Activated CD4-positive, alpha-beta T cell treated with anti-CD3 and anti-CD28 coated beads for 36 hours (primary cell): ENCODE measurements at regions of chr22 and their contacts with region 1.

Region 1: GRCh38 chr22:29603358-29604075 is at the start of gene NF2:
- DNase-seq: peak; percentile 99
- ATAC-seq: peak; percentile 97
- H3K4me3 Mint-ChIP-seq: peak within 1 kb of the TSS; percentile 92
- H3K27ac Mint-ChIP-seq: peak within 1 kb of the TSS; percentile 97
- H3K4me1 Mint-ChIP-seq: peaks cover 29% of the 10 kb centered on the region
- H3K27me3 Mint-ChIP-seq: no peaks in the 10 kb centered on the region
- total RNA-seq, gene NF2: 40.2 to 43.1 TPM

Region 2: DNA sequence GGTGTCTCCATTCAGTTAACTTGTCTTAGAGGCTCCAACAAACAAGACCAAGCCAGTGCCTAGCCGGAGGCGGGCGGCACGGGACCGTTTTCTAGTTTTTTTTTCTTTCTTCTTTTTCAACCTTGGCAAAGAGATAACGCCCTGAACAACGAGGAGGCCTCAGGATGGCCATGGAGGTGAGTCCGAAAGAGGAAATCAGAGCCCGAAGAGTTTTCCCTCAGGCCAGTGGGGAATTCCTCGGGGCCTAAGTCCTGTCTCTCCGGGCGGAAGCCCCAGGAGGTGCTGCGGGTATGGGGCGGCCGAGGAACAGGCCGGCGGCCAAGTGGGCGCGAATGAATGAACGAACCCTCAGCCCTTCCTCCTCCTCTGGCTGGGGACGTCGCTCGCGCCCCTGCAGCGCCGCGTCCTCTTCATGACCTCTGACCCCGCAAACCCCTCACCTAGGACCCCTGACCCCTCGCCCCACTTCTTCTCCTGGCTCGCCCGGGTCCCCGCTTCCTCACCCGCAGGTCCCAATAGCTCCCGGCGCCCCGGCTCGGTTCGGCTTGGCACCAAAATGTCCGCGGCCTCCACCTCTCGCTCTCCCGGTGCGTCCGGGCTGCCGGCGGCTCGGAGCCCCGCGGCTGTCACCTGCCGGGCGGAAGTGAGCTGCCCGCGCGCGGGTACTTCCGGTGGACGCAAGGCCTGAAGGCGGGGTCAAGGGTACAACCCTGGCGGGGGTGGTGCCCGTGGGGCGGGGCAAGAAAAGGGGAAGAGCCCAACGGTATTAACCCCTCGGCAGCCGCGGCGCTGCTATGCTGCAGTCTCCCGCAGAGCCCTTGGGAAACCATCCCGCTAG is 215.4 kb before region 1 on chr22 and contains the start of gene AP1B1:
- CTCF ChIA-PET with region 1: interaction called, 3 read pairs
- POLR2A ChIA-PET with region 1: no interaction called
- intact Hi-C with region 1: loop called in 1 of 2 experiments (anchors 1 kb)
- DNase-seq: peak; percentile 97
- ATAC-seq: peak; percentile 99
- H3K4me3 Mint-ChIP-seq: peak within 1 kb of the TSS; percentile 87
- H3K27ac Mint-ChIP-seq: peak within 1 kb of the TSS; percentile 83
- H3K4me1 Mint-ChIP-seq: peaks cover 30% of the 10 kb centered on the region
- H3K27me3 Mint-ChIP-seq: no peaks in the 10 kb centered on the region
- total RNA-seq, gene AP1B1: 56.6 to 59.9 TPM

Region 3: DNA sequence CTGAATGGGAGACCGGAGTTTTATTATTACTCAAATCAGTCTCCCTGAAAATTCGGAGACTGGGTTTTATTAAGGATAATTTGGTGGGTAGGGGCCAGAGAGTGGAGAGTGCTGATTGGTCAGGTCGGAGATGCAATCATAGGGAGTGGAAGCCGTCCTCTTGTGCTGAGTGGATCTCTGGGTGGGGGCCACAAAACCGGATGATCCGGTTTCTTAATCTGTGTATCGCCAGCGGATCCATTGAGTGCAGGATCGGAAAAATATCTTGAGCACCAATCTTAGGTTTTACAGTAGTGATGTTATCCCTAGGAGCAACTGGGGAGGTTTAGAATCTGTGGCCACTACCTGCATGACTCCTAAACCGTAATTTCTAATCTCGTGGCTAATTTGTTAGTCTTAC is 21.7 kb before region 1 on chr22:
- CTCF ChIA-PET with region 1: interaction called, 20 read pairs
- POLR2A ChIA-PET with region 1: no interaction called
- intact Hi-C with region 1: loop called in 1 of 2 experiments (anchors 1 kb)
- DNase-seq: no peak
- ATAC-seq: no peak
- H3K4me3 Mint-ChIP-seq: peak overlapping the region; percentile 89
- H3K27ac Mint-ChIP-seq: peak overlapping the region; percentile 93
- H3K4me1 Mint-ChIP-seq: peaks cover 8% of the 10 kb centered on the region
- H3K27me3 Mint-ChIP-seq: no peaks in the 10 kb centered on the region

Region 4: GRCh38 chr22:29625090-29625825 is 21.7 kb after region 1 on chr22:
- CTCF ChIA-PET with region 1: interaction called, 44 read pairs
- POLR2A ChIA-PET with region 1: interaction called, 5 read pairs
- intact Hi-C with region 1: loop called in 1 of 2 experiments (anchors 2 kb)
- DNase-seq: peak; percentile 68
- ATAC-seq: peak; percentile 61
- H3K4me3 Mint-ChIP-seq: no peak overlapping the region
- H3K27ac Mint-ChIP-seq: peak overlapping the region; percentile 14
- H3K4me1 Mint-ChIP-seq: peaks cover 65% of the 10 kb centered on the region
- H3K27me3 Mint-ChIP-seq: no peaks in the 10 kb centered on the region

Region 5: GRCh38 chr22:29883045-29883774 is 279.7 kb after region 1 on chr22 and contains the start of gene MTMR3:
- CTCF ChIA-PET with region 1: interaction called, 3 read pairs
- POLR2A ChIA-PET with region 1: interaction called, 3 read pairs
- intact Hi-C with region 1: loop called in 1 of 2 experiments (anchors 1 kb)
- DNase-seq: peak; percentile 95
- ATAC-seq: peak; percentile 83
- H3K4me3 Mint-ChIP-seq: peak within 1 kb of the TSS; percentile 89
- H3K27ac Mint-ChIP-seq: peak within 1 kb of the TSS; percentile 84
- H3K4me1 Mint-ChIP-seq: peaks cover 6% of the 10 kb centered on the region
- H3K27me3 Mint-ChIP-seq: no peaks in the 10 kb centered on the region
- total RNA-seq, gene MTMR3: 19.2 to 22.8 TPM

Region 6: DNA sequence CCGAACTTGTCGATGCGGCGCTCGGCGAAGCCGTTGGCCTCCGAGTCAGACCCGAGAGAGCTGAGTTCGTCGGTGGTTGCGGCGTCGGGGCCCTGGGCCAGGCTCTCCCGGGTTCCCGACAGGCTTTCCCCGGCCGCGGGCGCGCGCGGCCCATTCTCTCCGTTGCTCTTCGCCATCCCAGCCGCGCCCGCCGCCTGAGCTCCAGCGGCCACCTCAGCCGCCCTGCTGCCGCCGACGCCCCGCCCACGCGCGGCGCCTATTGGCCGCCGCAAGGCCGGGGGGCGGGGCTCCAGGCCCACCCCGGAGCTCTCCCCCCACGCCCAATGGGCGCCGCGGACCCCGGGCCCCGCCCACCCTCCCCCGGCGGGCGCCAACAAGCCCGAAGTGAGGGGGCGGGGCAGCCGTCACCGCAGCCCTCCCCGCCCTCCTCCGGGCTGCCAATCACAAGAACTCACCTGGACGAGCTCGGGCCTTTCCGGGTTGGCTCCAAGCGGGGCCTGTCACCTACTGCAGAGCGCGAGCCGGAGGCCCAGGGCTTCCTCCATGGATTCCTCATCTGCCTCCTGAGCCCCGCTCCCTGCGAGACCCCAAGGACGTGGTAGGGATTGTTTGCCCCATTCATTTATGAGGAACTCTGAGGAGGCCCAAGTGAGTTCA is 723.3 kb after region 1 on chr22 and contains the start of gene TBC1D10A:
- CTCF ChIA-PET with region 1: no interaction called
- POLR2A ChIA-PET with region 1: no interaction called
- intact Hi-C with region 1: loop called in 1 of 2 experiments (anchors 2 kb)
- DNase-seq: peak; percentile 97
- ATAC-seq: peak; percentile 87
- H3K4me3 Mint-ChIP-seq: peak within 1 kb of the TSS; percentile 82
- H3K27ac Mint-ChIP-seq: peak within 1 kb of the TSS; percentile 89
- H3K4me1 Mint-ChIP-seq: peaks cover 45% of the 10 kb centered on the region
- H3K27me3 Mint-ChIP-seq: no peaks in the 10 kb centered on the region
- total RNA-seq, gene TBC1D10A: 20.1 to 21.6 TPM